Prostate gland (tissue), 2 donors: ENCODE measurements at regions of chr22 and their contacts with region 1.

Region 1: GRCh38 chr22:23521441-23522113 is 58.5 kb downstream of the IGLL1 start:
- DNase-seq: peak; percentile 94
- H3K4me3 ChIP-seq: peak overlapping the region; percentile 26 to 28
- H3K27ac ChIP-seq: peak overlapping the region; percentile 98 to 99
- H3K4me1 ChIP-seq: peaks cover 23% of the 10 kb centered on the region
- H3K27me3 ChIP-seq: no peaks in the 10 kb centered on the region
- CTCF ChIP-seq: peak in 2 of 4 experiments; percentile 31 to 34
- POLR2A ChIP-seq: peak; percentile 43

Region 2: GRCh38 chr22:22720201-22720723 is 801.3 kb before region 1 on chr22:
- intact Hi-C with region 1: no loop called
- DNase-seq: no peak
- H3K4me3 ChIP-seq: no peak overlapping the region
- H3K27ac ChIP-seq: no peak overlapping the region
- H3K4me1 ChIP-seq: no peaks in the 10 kb centered on the region
- H3K27me3 ChIP-seq: no peaks in the 10 kb centered on the region
- CTCF ChIP-seq: peak in 3 of 4 experiments; percentile 7 to 23 (median 14)
- POLR2A ChIP-seq: no peak

Region 3: DNA sequence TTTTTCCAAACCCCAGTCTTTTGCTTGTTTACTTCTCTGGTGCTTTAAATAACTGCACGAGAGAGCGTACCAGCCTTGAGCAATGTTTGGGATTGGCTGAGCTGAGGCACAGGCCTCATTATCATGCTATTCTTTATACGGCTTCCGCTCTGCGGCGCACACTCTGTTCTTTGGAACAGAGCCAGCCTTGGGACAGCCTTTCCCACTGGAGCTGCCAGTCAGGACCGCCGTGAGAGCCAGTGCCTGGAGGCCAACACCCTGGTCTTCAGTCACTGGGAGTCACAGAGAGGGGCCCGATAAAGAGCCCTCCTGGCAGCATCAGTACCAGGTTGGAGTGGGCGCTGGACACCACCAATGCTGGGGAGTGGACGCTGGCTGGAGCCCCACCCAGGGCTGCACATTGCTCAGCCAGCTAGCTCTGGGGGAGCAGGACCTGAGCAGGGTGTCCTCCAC is 215.6 kb before region 1 on chr22:
- intact Hi-C with region 1: loop called (anchors 10 kb)
- DNase-seq: peak; percentile 33
- H3K4me3 ChIP-seq: no peak overlapping the region
- H3K27ac ChIP-seq: peak overlapping the region; percentile 69 to 79
- H3K4me1 ChIP-seq: no peaks in the 10 kb centered on the region
- H3K27me3 ChIP-seq: no peaks in the 10 kb centered on the region
- CTCF ChIP-seq: no peak
- POLR2A ChIP-seq: no peak

Region 4: DNA sequence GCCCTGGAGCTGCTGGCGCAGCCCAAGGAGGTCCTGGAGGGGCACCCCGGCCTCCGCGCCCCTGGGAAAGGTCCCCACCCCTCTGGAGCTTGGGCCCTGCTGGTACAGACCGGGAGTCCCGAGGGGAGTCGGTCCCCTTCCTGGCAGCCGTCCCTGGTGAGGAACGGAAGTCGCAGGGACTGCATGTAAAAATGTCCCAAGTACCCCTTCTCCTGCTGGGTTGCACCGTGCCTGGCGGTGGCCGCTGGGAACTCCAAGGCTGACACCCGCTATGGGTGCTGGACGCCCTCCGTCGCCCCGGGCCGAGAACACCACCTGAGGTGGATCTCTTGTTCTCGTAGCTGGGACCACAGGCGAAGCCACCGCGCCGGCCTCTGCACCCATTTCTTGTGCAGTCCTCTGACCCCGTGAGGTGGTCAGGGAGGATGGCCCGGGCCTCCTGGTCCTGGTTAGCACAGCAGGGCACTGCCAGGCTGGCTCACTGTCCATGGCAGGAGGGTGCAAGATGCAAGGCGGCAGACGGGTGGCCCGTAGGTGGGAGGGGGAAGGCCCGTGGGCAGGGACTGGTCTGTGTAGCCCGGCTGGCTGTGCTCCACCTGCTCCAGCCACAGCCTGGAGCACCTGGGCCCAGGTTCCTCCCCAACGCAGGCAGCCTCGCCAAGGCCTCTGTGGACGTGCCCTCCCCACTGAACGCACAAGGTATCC is 106.7 kb before region 1 on chr22:
- intact Hi-C with region 1: no loop called
- DNase-seq: no peak
- H3K4me3 ChIP-seq: no peak overlapping the region
- H3K27ac ChIP-seq: no peak overlapping the region
- H3K4me1 ChIP-seq: no peaks in the 10 kb centered on the region
- H3K27me3 ChIP-seq: no peaks in the 10 kb centered on the region
- CTCF ChIP-seq: no peak
- POLR2A ChIP-seq: no peak